CD8-positive, alpha-beta memory T cell (primary cell): ENCODE measurements at regions of chr1 and their contacts with region 1.

Region 1: DNA sequence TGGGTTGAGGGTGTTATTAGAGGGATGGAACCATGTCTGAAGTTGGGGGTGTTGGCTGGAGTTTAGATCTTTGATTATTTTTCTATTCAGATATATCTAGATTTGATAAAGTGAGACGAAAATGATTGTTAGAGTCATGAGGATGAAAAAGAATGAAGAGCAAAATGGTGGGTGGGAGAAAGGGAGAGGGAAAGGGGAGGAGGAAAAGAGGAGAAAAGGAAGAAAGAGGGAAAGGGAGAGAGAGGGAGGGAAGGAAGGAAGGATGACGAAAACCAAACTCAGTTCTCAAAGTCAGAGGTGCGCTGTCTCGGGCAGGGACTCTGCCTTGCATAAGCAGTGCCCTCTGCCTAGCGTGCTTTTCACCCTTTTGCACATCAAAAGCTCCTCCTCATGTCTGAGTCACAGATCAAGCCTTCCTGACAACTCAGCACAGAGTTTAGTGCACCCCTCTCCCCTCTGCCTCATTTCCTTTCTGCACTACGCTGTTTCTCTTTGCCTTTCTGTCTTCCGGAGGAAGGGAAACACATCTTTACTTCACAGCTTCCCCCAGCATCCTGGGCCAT is 225.8 kb upstream of the PROX1 start:
- DNase-seq: peak in 1 of 5 donors; percentile 28
- H3K4me3 ChIP-seq: no peak overlapping the region
- H3K4me3 Mint-ChIP-seq: no peak overlapping the region
- H3K27ac ChIP-seq: no peak overlapping the region
- H3K27ac Mint-ChIP-seq: no peak overlapping the region
- H3K4me1 ChIP-seq: peaks cover 7% of the 10 kb centered on the region
- H3K4me1 Mint-ChIP-seq: no peaks in the 10 kb centered on the region
- H3K27me3 ChIP-seq: no peaks in the 10 kb centered on the region
- H3K27me3 Mint-ChIP-seq: peaks cover 0 to 4% of the 10 kb centered on the region in 2 donors

Region 2: GRCh38 chr1:214086945-214087344 is 325.0 kb after region 1 on chr1:
- CTCF ChIA-PET with region 1: no interaction called
- POLR2A ChIA-PET with region 1: interaction called, 11 read pairs
- DNase-seq: no peak
- H3K4me3 ChIP-seq: no peak overlapping the region
- H3K4me3 Mint-ChIP-seq: no peak overlapping the region
- H3K27ac ChIP-seq: no peak overlapping the region
- H3K27ac Mint-ChIP-seq: no peak overlapping the region
- H3K4me1 ChIP-seq: no peaks in the 10 kb centered on the region
- H3K4me1 Mint-ChIP-seq: no peaks in the 10 kb centered on the region
- H3K27me3 ChIP-seq: no peaks in the 10 kb centered on the region
- H3K27me3 Mint-ChIP-seq: peaks cover 4 to 8% of the 10 kb centered on the region in 2 donors